Activated naive CD8-positive, alpha-beta T cell treated with anti-CD3 and anti-CD28 coated beads, Interleukin-2, amount 10 ng/mL, durations not matched to agents 7 days and 5 days (primary cell): ENCODE measurements at regions of chr17 and their contacts with region 1.

Region 1: GRCh38 chr17:38898812-38899348 is 26.5 kb upstream of the LASP1NB start:
- DNase-seq: peak; percentile 81
- ATAC-seq: peak; percentile 71
- H3K4me3 Mint-ChIP-seq: peak overlapping the region; percentile 68
- H3K27ac Mint-ChIP-seq: peak overlapping the region; percentile 91
- H3K4me1 Mint-ChIP-seq: peaks cover 63% of the 10 kb centered on the region
- H3K27me3 Mint-ChIP-seq: no peaks in the 10 kb centered on the region

Region 2: DNA sequence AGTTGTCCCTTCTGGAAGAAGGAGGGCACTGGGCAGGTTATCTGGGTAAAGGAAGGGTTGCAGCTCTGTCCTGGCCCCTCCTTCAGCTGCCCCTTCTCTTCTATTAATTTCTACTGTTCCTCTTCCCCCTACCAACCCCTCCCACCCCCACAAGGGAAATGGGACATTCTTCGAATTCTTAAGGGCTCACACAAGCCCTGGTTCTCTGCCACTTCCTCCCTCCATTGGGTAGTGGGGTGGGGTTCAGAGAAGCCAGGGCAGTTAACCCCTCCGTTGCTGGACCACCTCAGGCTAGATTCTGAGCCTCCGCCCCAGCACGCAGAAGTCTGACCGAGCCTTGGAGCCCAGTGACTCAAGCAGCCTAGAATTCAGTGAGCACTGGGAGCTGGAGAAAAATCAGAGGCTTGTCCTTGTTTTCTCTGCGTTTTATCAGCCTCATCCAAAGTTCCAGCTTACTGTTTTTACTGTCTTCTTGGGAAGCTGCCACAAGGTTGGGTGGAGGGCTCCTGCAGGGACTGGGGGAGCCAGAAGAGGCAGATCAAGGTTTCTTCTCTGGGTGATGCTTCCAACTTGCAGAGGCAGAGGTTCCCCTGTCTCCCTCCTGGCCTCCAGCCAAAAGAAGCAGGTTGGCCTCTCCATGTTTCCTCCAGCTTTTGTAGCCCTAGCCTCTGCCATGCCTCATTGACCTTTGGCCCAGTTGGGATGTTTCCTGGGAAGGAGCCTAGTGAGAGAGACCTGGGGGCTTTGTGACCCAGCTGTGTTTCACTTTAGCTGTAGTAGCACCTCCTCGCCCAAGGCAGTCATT is 18.8 kb before region 1 on chr17:
- POLR2A ChIA-PET with region 1: interaction called, 42 read pairs
- DNase-seq: no peak
- ATAC-seq: peak; percentile 28
- H3K4me3 Mint-ChIP-seq: peak overlapping the region; percentile 80
- H3K27ac Mint-ChIP-seq: peak overlapping the region; percentile 89
- H3K4me1 Mint-ChIP-seq: peaks cover 86% of the 10 kb centered on the region
- H3K27me3 Mint-ChIP-seq: no peaks in the 10 kb centered on the region

Region 3: GRCh38 chr17:38885728-38886561 is 12.9 kb before region 1 on chr17:
- POLR2A ChIA-PET with region 1: interaction called, 42 read pairs
- DNase-seq: no peak
- ATAC-seq: no peak
- H3K4me3 Mint-ChIP-seq: peak overlapping the region; percentile 61
- H3K27ac Mint-ChIP-seq: peak overlapping the region; percentile 77
- H3K4me1 Mint-ChIP-seq: peaks cover 89% of the 10 kb centered on the region
- H3K27me3 Mint-ChIP-seq: no peaks in the 10 kb centered on the region

Region 4: GRCh38 chr17:38922538-38923297 is 23.8 kb after region 1 on chr17:
- POLR2A ChIA-PET with region 1: interaction called, 12 read pairs
- DNase-seq: no peak
- ATAC-seq: no peak
- H3K4me3 Mint-ChIP-seq: no peak overlapping the region
- H3K27ac Mint-ChIP-seq: peak overlapping the region; percentile 58
- H3K4me1 Mint-ChIP-seq: peaks cover 38% of the 10 kb centered on the region
- H3K27me3 Mint-ChIP-seq: no peaks in the 10 kb centered on the region